Common myeloid progenitor, CD34-positive (primary cell): ENCODE measurements at regions of chr12 and their contacts with region 1.

Region 1: GRCh38 chr12:66169221-66170170 is at the start of gene TMBIM4:
- DNase-seq: peak; percentile 93 to 98 (median 96)
- H3K4me3 ChIP-seq: peak within 1 kb of the TSS; percentile 71 to 97 (median 91)
- H3K27ac ChIP-seq: peak within 1 kb of the TSS; percentile 95 to 98
- H3K4me1 ChIP-seq: peaks cover 10 to 22% (median 12%) of the 10 kb centered on the region in 4 experiments
- H3K27me3 ChIP-seq: no peaks in the 10 kb centered on the region

Region 2: GRCh38 chr12:66144791-66145754 is 24.4 kb before region 1 on chr12:
- CTCF ChIA-PET with region 1: interaction called, 16 read pairs
- POLR2A ChIA-PET with region 1: interaction called, 3 read pairs
- DNase-seq: peak; percentile 90 to 95 (median 93)
- H3K4me3 ChIP-seq: peak overlapping the region in 6 of 7 experiments; percentile 15 to 63 (median 34)
- H3K27ac ChIP-seq: peak overlapping the region; percentile 78 to 90
- H3K4me1 ChIP-seq: peaks cover 16 to 40% (median 25%) of the 10 kb centered on the region in 4 experiments
- H3K27me3 ChIP-seq: no peaks in the 10 kb centered on the region

Region 3: GRCh38 chr12:66188584-66189485 is 19.3 kb after region 1 on chr12 and contains the start of gene IRAK3:
- CTCF ChIA-PET with region 1: interaction called, 18 read pairs
- POLR2A ChIA-PET with region 1: interaction called, 20 read pairs
- DNase-seq: peak; percentile 72 to 92 (median 87)
- H3K4me3 ChIP-seq: peak within 1 kb of the TSS; percentile 47 to 94 (median 75)
- H3K27ac ChIP-seq: peak within 1 kb of the TSS; percentile 71 to 84
- H3K4me1 ChIP-seq: peaks cover 23 to 42% (median 33%) of the 10 kb centered on the region in 4 experiments
- H3K27me3 ChIP-seq: no peaks in the 10 kb centered on the region

Region 4: DNA sequence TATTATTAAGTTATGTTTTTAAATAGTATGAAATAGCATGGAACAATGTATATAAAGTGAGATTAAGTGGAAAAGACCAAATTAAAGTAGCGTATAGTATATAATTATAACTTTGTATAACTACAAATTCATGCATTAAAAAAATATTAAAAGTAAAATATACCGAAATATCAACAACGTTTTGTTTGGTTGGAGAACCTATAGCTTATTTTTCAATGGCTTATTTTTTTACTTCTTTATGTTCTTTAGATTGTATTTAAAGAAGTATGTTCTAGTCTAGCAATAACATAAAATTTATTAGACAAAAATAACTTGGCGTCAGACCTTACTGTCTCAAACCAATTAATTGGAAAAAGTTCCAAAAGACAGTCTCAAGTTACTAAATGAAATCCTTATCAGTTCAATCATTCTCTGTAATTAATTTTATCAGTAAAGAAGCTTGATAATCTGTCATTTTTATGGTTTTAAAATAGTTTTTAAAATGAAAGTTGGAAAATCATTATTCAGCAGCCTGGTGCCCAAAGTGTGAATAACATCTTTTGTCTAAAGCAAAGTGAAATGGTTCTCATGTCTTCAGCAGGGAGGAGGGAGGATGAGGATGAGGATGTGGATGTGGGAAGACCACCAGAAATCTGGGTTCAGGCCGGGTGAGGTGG is 66.3 kb after region 1 on chr12:
- CTCF ChIA-PET with region 1: interaction called, 21 read pairs
- POLR2A ChIA-PET with region 1: interaction called, 7 read pairs
- DNase-seq: peak; percentile 35 to 75 (median 61)
- H3K4me3 ChIP-seq: peak overlapping the region; percentile 40 to 82 (median 65)
- H3K27ac ChIP-seq: peak overlapping the region; percentile 33 to 63
- H3K4me1 ChIP-seq: peaks cover 0 to 14% (median 4%) of the 10 kb centered on the region in 4 experiments
- H3K27me3 ChIP-seq: no peaks in the 10 kb centered on the region

Region 5: GRCh38 chr12:66257990-66258389 is 88.5 kb after region 1 on chr12:
- CTCF ChIA-PET with region 1: no interaction called
- POLR2A ChIA-PET with region 1: no interaction called
- DNase-seq: no peak
- H3K4me3 ChIP-seq: no peak overlapping the region
- H3K27ac ChIP-seq: no peak overlapping the region
- H3K4me1 ChIP-seq: no peaks in the 10 kb centered on the region
- H3K27me3 ChIP-seq: no peaks in the 10 kb centered on the region